ENCODE measurements at regions of chr15 and their contacts with region 1.

Region 1: DNA sequence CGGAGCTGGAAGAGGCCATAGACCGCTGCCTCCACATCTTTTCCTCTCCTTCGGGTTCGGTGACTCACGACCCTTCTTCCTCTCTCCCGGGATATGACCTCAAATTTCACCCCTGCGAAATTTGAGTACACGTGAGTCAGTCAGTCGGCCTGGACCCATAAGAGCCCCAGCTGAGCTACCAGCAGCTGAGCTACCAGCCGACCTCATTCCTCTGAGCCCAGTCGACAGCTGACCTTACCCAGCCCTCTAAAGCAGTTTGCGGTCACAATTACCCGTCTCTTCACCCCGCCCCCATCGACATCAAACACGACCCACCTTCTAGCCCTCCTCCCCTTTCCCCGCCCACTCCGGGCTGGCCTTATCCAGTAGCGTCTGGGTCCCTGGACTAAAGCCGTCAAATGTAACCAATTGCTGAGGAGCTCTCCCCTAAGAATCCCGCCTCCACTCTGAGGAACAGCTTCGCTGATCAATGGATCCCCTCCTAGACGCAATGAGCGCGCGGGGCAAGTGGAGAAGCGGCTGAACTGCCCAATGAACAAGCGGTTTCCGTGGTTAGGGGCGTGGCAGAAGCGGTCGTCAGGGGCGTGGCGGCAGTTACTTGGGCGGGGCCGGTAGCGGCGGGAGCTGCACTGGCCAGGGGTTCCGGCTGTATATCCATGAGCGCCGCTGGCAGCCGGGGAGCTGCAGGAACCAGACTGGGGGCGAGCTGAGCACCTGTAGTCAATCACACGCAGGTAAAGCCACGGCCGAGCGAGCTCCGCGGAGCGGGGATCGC is at the start of gene ABHD2:
- DNase-seq: peak; percentile 98 to 99 (median 98)
- H3K4me3 ChIP-seq: peak within 1 kb of the TSS; percentile 49 to 89
- H3K4me3 Mint-ChIP-seq: no peak within 1 kb of the TSS
- H3K27ac ChIP-seq: peak within 1 kb of the TSS; percentile 75
- H3K27ac Mint-ChIP-seq: peak within 1 kb of the TSS in 6 of 7 donors; percentile 57 to 98 (median 94)
- H3K4me1 ChIP-seq: peaks cover 38% of the 10 kb centered on the region
- H3K4me1 Mint-ChIP-seq: peaks cover 24 to 38% (median 32%) of the 10 kb centered on the region in 4 donors
- H3K27me3 ChIP-seq: no peaks in the 10 kb centered on the region
- H3K27me3 Mint-ChIP-seq: no peaks in the 10 kb centered on the region
- total RNA-seq, gene ABHD2: 65.4 to 68.9 TPM

Region 2: DNA sequence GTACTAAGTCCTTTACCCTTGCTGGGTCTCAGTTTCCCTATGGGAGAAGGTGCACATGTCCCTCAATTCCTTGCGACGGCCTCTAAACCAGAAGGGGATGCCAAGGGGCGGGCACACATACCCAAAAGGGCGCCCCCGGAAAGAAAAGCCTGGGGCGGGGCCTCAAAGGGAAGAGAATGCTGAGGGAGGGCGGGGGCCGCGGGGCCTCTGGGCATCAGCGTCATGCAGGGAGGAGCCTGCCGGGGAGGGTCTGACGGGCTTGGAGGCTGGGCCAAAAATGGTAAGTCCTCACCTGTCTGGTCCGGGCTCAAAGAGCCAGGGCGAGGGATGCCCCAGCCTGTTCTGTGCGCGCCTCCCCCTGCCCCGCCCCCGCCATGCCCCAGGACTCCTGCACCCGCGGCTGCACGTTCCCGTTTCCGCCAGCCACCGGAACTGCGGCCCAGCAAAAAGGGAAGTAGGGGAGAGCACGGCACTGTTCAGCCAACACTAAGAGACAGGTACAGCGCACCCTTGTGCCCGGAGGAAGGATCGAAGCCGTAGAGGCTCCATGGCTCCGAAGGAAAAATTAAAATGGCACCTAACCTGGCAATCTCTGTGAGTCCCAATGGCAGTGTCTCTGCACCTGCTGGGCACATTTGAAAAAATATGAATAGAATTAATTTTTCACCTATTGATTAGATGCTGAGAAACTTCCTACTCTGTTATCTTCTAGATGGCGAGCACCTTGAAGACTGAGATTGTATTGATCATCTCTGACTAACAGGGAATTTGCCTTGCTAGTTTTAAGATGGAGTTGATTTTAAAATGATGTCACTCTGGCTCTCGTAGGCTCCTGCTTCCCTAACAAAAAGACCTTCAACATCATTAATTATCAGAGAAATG is 541.5 kb before region 1 on chr15 and contains the start of gene DET1:
- CTCF ChIA-PET with region 1: no interaction called
- POLR2A ChIA-PET with region 1: no interaction called
- intact Hi-C with region 1: loop called (anchors 2 kb)
- DNase-seq: peak; percentile 92 to 97 (median 94)
- H3K4me3 ChIP-seq: peak within 1 kb of the TSS; percentile 34 to 63
- H3K4me3 Mint-ChIP-seq: peak within 1 kb of the TSS; percentile 92 to 95 (median 92)
- H3K27ac ChIP-seq: peak within 1 kb of the TSS; percentile 62
- H3K27ac Mint-ChIP-seq: peak within 1 kb of the TSS; percentile 86 to 97 (median 97)
- H3K4me1 ChIP-seq: peaks cover 9% of the 10 kb centered on the region
- H3K4me1 Mint-ChIP-seq: peaks cover 4 to 23% (median 8%) of the 10 kb centered on the region in 4 donors
- H3K27me3 ChIP-seq: no peaks in the 10 kb centered on the region
- H3K27me3 Mint-ChIP-seq: no peaks in the 10 kb centered on the region
- total RNA-seq, gene DET1: 11.5 to 11.7 TPM

Region 3: DNA sequence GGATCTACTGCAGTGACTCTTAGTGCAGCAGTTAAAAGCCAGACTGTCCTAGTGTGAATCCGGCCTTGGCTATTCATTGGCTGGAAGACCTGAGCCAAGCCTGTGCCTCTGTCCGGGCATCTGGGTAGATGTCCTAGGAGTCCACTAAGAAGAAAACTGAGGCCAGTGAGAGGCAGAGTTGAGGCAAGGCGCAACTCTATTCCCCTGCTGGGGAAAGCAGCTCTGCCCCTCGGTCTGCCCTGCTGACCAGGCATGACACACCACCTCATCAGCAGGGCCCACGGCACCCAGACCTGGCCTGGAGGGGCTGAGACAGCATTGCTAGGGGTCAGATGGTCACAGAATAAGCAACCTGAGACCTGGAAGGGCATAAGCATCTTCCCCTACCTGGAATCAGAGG is 46.5 kb before region 1 on chr15:
- CTCF ChIA-PET with region 1: no interaction called
- POLR2A ChIA-PET with region 1: no interaction called
- intact Hi-C with region 1: no loop called
- DNase-seq: no peak
- H3K4me3 ChIP-seq: no peak overlapping the region
- H3K4me3 Mint-ChIP-seq: no peak overlapping the region
- H3K27ac ChIP-seq: no peak overlapping the region
- H3K27ac Mint-ChIP-seq: no peak overlapping the region
- H3K4me1 ChIP-seq: no peaks in the 10 kb centered on the region
- H3K4me1 Mint-ChIP-seq: no peaks in the 10 kb centered on the region
- H3K27me3 ChIP-seq: no peaks in the 10 kb centered on the region
- H3K27me3 Mint-ChIP-seq: peaks cover 7 to 14% of the 10 kb centered on the region in 2 donors

Region 4: DNA sequence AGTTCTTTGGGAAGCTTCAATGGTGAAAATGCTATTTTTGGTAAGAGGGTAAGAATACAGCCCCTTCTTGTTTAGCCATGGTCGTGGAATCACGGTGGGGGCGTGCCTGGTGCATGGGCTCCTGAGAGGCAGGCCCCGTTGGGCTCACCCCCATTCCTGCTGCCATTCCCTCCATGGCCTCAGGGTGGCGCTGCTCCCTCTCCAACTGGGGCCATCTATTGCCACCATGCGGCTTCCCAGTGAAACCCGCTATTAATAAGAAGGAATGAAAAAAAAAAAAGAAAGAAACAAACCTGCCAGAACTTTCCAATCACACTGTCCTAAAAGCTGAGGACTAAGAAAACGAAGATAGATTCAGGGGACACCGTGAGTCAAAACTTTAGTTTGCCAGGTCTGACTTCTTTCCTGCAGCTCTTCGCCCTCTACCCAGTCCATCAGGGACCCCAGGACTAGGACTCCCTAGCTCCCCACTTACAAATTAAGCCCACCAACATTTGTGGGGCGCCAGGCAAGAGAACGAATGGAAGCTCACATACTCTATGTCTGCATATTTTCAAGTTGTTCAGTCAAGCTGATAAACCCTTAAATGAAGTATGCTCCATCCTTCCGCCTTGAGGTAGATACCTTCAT is 30.4 kb before region 1 on chr15:
- CTCF ChIA-PET with region 1: interaction called, 78 read pairs
- POLR2A ChIA-PET with region 1: interaction called, 3 read pairs
- intact Hi-C with region 1: loop called (anchors 1 kb)
- DNase-seq: peak; percentile 75 to 84 (median 79)
- H3K4me3 ChIP-seq: no peak overlapping the region
- H3K4me3 Mint-ChIP-seq: no peak overlapping the region
- H3K27ac ChIP-seq: no peak overlapping the region
- H3K27ac Mint-ChIP-seq: no peak overlapping the region
- H3K4me1 ChIP-seq: no peaks in the 10 kb centered on the region
- H3K4me1 Mint-ChIP-seq: peaks cover 0 to 12% (median 7%) of the 10 kb centered on the region in 4 donors
- H3K27me3 ChIP-seq: no peaks in the 10 kb centered on the region
- H3K27me3 Mint-ChIP-seq: no peaks in the 10 kb centered on the region

Region 5: GRCh38 chr15:89105147-89105546 is 17.1 kb after region 1 on chr15:
- CTCF ChIA-PET with region 1: interaction called, 6 read pairs
- POLR2A ChIA-PET with region 1: interaction called, 19 read pairs
- intact Hi-C with region 1: no loop called
- DNase-seq: no peak
- H3K4me3 ChIP-seq: no peak overlapping the region
- H3K4me3 Mint-ChIP-seq: no peak overlapping the region
- H3K27ac ChIP-seq: no peak overlapping the region
- H3K27ac Mint-ChIP-seq: peak overlapping the region in 1 of 7 donors; percentile 29
- H3K4me1 ChIP-seq: peaks cover 13% of the 10 kb centered on the region
- H3K4me1 Mint-ChIP-seq: peaks cover 17 to 41% (median 24%) of the 10 kb centered on the region in 4 donors
- H3K27me3 ChIP-seq: no peaks in the 10 kb centered on the region
- H3K27me3 Mint-ChIP-seq: no peaks in the 10 kb centered on the region

Region 6: DNA sequence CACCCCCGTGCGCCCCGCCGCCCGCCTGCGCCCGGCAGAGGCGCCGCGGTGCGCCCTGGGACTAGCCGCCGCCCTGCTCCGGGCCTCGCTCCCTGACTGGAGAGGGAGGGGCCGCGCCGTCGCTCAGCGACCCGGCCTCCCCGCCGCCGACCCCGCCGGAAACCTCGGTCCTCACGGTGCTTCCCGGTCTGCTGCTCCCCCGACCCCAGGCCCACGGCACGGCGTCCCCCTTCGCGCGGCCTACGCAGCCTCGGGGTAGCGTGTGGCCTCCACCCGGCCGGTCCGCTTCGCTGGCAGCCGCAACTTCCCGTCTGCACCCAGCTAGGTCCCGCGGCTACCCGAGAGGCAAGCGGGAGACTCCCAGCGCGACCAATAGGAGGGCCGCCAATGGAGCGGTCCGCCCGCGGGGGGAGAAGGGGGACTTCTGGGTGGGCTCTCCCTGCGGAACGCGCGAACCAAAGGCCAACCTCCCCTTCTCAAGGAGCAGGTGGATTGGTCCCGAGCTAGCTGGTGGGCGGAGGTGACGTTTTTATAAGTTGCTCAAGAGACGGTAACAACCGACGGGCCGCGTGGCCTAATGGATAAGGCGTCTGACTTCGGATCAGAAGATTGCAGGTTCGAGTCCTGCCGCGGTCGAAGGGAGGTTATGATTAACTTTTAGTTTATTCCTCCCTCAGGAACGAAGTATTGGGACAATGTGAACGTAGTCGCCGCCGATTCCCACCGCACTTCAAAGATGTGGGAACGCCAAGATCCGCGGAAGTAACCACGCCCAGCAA is 246.7 kb after region 1 on chr15 and contains the start of gene POLG:
- CTCF ChIA-PET with region 1: no interaction called
- POLR2A ChIA-PET with region 1: interaction called, 8 read pairs
- intact Hi-C with region 1: loop called (anchors 1 kb)
- DNase-seq: peak; percentile 99 to 100 (median 99)
- H3K4me3 ChIP-seq: peak within 1 kb of the TSS; percentile 81 to 92
- H3K4me3 Mint-ChIP-seq: peak within 1 kb of the TSS; percentile 90 to 100 (median 94)
- H3K27ac ChIP-seq: peak within 1 kb of the TSS; percentile 69
- H3K27ac Mint-ChIP-seq: peak within 1 kb of the TSS; percentile 88 to 100 (median 98)
- H3K4me1 ChIP-seq: peaks cover 54% of the 10 kb centered on the region
- H3K4me1 Mint-ChIP-seq: peaks cover 37 to 59% (median 47%) of the 10 kb centered on the region in 4 donors
- H3K27me3 ChIP-seq: no peaks in the 10 kb centered on the region
- H3K27me3 Mint-ChIP-seq: peaks cover 2 to 7% of the 10 kb centered on the region in 2 donors
- total RNA-seq, gene POLG: 148 to 151 TPM